Heart left ventricle (tissue), 16 donors: ENCODE measurements at regions of chr4 and their contacts with region 1.

Region 1: GRCh38 chr4:7987148-7987989 is 47.7 kb upstream of the AFAP1 start:
- DNase-seq: peak; percentile 64 to 72 (median 67)
- ATAC-seq: peak; percentile 46 to 79 (median 75)
- H3K4me3 ChIP-seq: no peak overlapping the region
- H3K27ac ChIP-seq: no peak overlapping the region
- H3K4me1 ChIP-seq: peaks cover 0 to 13% (median 7%) of the 10 kb centered on the region in 12 donors
- H3K27me3 ChIP-seq: no peaks in the 10 kb centered on the region
- CTCF ChIP-seq: peak; percentile 75 to 93 (median 86)
- POLR2A ChIP-seq: no peak

Region 2: DNA sequence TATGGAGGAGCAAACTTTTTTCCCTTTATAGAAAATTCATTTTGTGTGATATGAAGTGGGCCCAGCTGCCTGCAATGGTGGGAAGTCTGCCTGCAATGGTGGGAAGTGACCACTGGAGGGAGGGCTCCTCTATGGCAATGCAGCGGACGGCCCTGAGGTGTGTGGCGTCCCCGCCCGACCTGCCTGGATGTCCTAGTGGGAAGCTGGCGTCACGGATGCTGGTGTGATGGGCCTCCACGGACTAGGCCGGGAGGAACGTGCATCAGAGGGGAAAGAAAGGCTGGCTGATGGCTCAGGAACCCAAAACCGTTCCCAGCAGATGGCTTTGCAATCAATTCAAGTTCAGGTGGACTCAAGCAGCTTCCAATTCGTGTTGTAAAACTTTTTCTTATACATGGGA is 225.6 kb before region 1 on chr4:
- intact Hi-C with region 1: loop called in 7 of 10 experiments (anchors 5 to 10 kb)
- DNase-seq: peak; percentile 72 to 89 (median 78)
- ATAC-seq: peak; percentile 68 to 87 (median 78)
- H3K4me3 ChIP-seq: no peak overlapping the region
- H3K27ac ChIP-seq: peak overlapping the region in 2 of 12 donors; percentile 8 to 48
- H3K4me1 ChIP-seq: peaks cover 0 to 22% (median 11%) of the 10 kb centered on the region in 12 donors
- H3K27me3 ChIP-seq: no peaks in the 10 kb centered on the region
- CTCF ChIP-seq: peak; percentile 69 to 92 (median 82)
- POLR2A ChIP-seq: no peak

Region 3: DNA sequence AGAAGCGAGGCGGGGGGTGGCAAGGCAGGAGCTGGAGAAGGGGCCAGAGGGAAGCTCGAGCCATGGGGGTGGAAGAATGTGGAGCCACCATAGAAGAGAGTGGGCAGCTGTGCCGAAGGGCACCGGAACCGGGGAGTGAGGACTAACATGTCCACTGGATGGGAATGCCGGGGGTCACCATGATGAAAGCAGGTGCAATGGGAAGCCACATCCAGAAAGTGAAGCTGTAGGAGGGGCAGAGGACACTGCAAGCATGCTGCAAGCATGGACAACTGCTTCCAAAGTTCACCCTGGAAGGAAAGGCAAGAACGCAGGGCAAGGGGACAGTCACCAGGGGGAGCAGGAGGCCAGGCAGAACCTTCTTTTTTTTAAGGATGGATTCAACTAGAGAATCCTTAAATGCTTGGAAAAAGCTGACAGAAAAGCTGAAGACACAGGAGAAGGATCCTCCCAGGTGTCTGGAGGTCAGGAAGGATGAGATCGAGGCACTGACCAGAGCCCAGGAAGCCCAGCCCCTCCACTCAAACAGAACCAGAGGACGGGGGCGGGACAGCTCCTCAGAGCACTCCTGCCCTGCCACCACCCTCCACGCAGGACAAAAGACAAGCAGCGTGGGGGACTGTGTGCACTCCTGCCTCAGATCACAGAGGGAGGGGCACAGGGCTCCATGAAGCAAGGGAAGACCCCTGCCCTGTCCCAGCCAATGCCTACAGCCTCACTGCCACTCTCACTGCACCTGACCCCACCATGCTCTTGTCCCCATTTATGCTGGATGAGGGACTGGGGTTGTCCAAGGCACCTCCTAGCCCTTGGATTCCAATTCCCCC is 216.9 kb before region 1 on chr4:
- intact Hi-C with region 1: loop called in 5 of 10 experiments (anchors 5 to 10 kb)
- DNase-seq: peak in 1 of 5 donors; percentile 23
- ATAC-seq: no peak
- H3K4me3 ChIP-seq: no peak overlapping the region
- H3K27ac ChIP-seq: no peak overlapping the region
- H3K4me1 ChIP-seq: peaks cover 0 to 10% (median 0%) of the 10 kb centered on the region in 12 donors
- H3K27me3 ChIP-seq: no peaks in the 10 kb centered on the region
- CTCF ChIP-seq: peak; percentile 32 to 67 (median 52)
- POLR2A ChIP-seq: no peak